ENCODE measurements at regions of chr20 and their contacts with region 1.

Region 1: DNA sequence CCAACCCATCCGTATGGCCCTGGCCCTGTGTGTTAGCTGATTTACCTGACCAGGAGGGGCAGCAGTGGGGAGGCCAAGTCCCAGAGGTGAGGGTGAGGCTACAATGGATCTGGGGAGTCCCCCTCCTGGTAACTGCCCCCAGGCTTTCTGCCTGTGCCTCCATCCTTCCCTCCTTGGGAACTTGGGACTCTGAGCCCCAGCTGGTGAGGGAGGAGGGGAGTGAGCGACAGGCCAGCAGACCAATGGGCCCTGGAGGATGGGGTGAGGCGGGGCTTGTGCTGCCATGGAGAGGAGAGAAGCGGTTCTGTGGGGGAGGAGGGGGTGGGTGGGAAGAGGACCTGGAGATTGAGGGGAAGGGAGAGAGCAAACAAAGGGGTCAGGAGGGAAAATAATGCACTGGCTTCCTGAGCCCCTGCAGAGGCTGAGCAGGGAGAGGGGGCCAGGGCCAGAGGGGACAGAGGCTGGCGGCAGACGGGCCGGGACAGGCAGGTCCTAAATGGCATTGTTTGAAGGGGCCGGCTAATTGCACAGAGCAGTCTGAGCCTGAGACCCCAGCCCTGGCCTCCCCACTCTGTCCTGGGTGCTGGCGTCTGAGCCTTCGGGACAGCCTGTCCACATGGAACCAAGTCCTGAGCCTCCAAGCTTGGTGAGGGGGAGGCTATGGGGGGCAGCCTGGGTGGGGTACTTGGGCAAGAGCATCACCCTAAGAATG is 17.5 kb downstream of the DNMT3B start:
- DNase-seq: no peak
- H3K4me3 ChIP-seq: no peak overlapping the region
- H3K27ac ChIP-seq: no peak overlapping the region
- H3K4me1 ChIP-seq: peaks cover 3 to 44% (median 39%) of the 10 kb centered on the region in 4 experiments
- H3K27me3 ChIP-seq: no peaks in the 10 kb centered on the region

Region 2: DNA sequence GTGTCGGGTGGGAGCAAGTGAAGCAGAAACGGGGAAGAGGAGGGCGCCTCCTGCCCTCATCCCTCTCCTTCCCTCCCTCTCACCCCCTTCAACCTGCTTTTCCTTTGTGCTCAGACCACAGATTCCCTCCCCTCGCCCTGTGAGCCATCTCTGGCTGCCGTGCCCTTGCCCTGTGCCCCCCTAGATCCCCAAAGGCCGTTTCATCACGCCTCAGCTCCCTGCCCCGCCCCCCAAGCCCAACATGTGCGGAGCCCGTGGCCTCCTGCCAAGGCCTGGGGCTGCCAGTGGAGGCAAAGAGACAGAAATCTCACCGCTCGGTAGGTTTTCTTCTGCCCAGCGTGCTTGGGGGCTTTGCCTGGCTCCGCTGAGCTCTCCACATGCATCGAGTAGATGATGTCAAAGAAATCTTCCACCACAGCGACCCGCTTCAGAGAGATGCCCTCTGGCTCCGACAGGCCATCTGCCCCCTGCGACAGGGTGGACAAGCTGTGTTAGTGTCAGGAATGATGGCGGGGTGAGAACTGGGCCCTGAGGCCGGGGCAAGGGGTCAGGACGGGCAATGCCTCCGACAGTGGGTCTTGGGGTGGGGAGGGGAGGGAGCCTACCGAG is 252.1 kb before region 1 on chr20:
- CTCF ChIA-PET with region 1: interaction called, 26 read pairs
- POLR2A ChIA-PET with region 1: no interaction called
- DNase-seq: peak in 2 of 3 donors; percentile 58 to 60
- H3K4me3 ChIP-seq: peak overlapping the region in 2 of 7 experiments; percentile 24 to 26
- H3K27ac ChIP-seq: no peak overlapping the region
- H3K4me1 ChIP-seq: peaks cover 0 to 93% (median 77%) of the 10 kb centered on the region in 4 experiments
- H3K27me3 ChIP-seq: no peaks in the 10 kb centered on the region

Region 3: DNA sequence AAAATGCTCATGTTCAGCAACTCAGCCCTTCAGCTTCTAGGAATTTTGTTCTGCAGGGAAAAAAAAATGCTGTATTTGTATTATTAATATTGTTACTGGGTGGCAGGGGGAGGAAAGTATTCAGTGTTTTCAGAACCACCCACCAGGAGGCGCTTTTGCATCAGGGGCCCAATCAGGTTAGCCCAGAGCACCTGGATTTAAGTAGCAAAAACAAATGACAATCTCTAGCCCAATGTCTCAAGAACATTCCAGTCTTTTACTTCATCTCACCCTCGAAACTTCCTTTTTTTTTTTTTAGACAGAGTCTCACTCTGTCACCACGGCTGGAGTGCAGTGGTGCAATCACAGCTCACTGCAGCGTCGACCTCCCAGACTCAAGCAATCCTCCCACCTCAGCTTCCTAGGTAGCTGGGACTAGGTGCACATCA is 105.3 kb before region 1 on chr20:
- CTCF ChIA-PET with region 1: interaction called, 114 read pairs
- POLR2A ChIA-PET with region 1: interaction called, 4 read pairs
- DNase-seq: peak; percentile 73 to 81 (median 81)
- H3K4me3 ChIP-seq: peak overlapping the region in 2 of 7 experiments; percentile 9 to 54
- H3K27ac ChIP-seq: peak overlapping the region in 1 of 2 experiments; percentile 86
- H3K4me1 ChIP-seq: peaks cover 17 to 93% (median 84%) of the 10 kb centered on the region in 4 experiments
- H3K27me3 ChIP-seq: no peaks in the 10 kb centered on the region

Region 4: DNA sequence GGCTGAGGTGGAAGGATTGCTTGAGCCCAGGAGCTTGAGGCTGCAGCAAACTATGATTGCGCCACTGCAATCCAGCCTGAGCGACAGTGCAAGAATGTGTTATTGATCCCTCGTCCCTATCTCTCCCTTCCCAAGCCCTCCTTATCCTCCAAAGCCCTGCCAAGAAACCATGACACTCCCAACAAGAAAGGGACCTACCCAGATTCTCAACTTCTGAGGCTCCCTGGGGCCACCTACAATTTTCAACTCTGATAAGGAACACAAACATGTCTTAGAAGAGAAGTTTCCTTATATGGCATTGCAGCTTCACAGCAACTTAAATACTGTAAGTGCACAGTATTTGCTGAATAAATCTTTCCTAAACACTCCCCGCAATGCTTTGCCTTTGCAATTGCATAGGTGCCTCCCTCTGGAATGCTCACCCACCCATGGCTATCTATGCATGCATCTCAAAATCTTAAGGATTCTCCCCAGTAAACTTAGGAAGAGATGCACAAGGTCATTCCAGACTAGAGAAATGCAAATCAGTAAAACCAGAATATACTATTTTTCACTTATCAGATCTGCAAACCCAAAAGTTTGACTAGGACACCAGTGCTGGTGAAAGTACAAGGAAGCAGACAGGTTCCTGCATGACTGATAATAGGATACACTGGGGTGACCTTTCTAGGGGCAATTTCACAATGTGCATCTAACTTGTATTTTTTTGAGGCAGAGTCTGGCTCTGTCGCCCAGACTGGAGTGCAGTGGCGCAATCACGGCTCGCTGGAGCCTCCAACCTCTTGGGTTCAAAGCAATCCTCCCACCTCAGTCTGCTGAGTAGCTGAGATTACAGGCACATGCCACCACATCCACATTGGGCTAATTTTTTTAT is 48.0 kb before region 1 on chr20:
- CTCF ChIA-PET with region 1: interaction called, 10 read pairs
- POLR2A ChIA-PET with region 1: interaction called, 3 read pairs
- DNase-seq: peak in 2 of 3 donors; percentile 27 to 36
- H3K4me3 ChIP-seq: no peak overlapping the region
- H3K27ac ChIP-seq: peak overlapping the region in 1 of 2 experiments; percentile 52
- H3K4me1 ChIP-seq: peaks cover 0 to 17% (median 15%) of the 10 kb centered on the region in 4 experiments
- H3K27me3 ChIP-seq: no peaks in the 10 kb centered on the region

Region 5: DNA sequence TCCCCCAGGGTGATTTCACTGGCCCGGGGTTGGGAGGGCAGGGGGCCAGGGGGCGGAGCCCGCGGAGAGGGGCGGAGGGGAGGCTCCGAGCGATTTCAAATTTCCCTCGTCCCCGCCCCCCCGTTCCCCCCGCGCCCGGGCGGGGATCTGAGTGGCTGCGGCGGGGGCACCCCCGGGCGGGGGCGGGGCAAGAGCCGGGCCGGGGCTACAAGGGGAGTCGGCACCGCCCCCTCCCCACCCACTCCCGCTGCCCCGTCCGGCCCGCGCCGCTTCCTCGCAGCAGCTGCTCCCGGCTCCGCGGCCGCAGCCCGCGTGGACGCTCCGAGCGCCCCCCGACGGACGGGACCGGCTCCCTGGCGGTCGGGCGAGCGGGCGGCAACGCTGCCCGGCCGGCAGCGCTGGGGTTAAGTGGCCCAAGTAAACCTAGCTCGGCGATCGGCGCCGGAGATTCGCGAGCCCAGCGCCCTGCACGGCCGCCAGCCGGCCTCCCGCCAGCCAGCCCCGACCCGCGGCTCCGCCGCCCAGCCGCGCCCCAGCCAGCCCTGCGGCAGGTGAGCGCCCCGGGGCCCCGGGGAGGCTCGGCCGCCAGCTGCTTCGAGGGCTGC is 17.4 kb before region 1 on chr20 and contains the start of gene DNMT3B:
- CTCF ChIA-PET with region 1: interaction called, 54 read pairs
- POLR2A ChIA-PET with region 1: interaction called, 5 read pairs
- DNase-seq: peak; percentile 65 to 82 (median 78)
- H3K4me3 ChIP-seq: peak within 1 kb of the TSS; percentile 69 to 99 (median 90)
- H3K27ac ChIP-seq: peak within 1 kb of the TSS in 1 of 2 experiments; percentile 76
- H3K4me1 ChIP-seq: peaks cover 12 to 38% (median 32%) of the 10 kb centered on the region in 4 experiments
- H3K27me3 ChIP-seq: no peaks in the 10 kb centered on the region

Region 6: GRCh38 chr20:32789896-32790750 is 10.5 kb after region 1 on chr20:
- CTCF ChIA-PET with region 1: interaction called, 24 read pairs
- POLR2A ChIA-PET with region 1: no interaction called
- DNase-seq: peak; percentile 54 to 74 (median 69)
- H3K4me3 ChIP-seq: no peak overlapping the region
- H3K27ac ChIP-seq: no peak overlapping the region
- H3K4me1 ChIP-seq: peaks cover 0 to 15% (median 8%) of the 10 kb centered on the region in 4 experiments
- H3K27me3 ChIP-seq: no peaks in the 10 kb centered on the region